ENCODE measurements at regions of chr5 and their contacts with region 1.

Region 1: GRCh38 chr5:81014348-81014747 is 54.2 kb downstream of the RASGRF2 start:
- DNase-seq: no peak
- ATAC-seq: no peak
- H3K4me3 ChIP-seq: no peak overlapping the region
- H3K27ac ChIP-seq: no peak overlapping the region
- H3K4me1 ChIP-seq: peaks cover 13% of the 10 kb centered on the region
- H3K27me3 ChIP-seq: no peaks in the 10 kb centered on the region
- CTCF ChIP-seq: no peak
- POLR2A ChIP-seq: no peak
- RAD21 ChIP-seq: no peak

Region 2: GRCh38 chr5:80825786-80826460 is 188.4 kb before region 1 on chr5:
- CTCF ChIA-PET with region 1: no interaction called
- POLR2A ChIA-PET with region 1: no interaction called
- dilution Hi-C with region 1: no loop called
- in situ Hi-C with region 1: no loop called
- intact Hi-C with region 1: no loop called
- DNase-seq: no peak
- ATAC-seq: no peak
- H3K4me3 ChIP-seq: no peak overlapping the region
- H3K27ac ChIP-seq: no peak overlapping the region
- H3K4me1 ChIP-seq: no peaks in the 10 kb centered on the region
- H3K27me3 ChIP-seq: no peaks in the 10 kb centered on the region
- CTCF ChIP-seq: no peak
- POLR2A ChIP-seq: no peak
- RAD21 ChIP-seq: no peak

Region 3: GRCh38 chr5:80975065-80975464 is 39.3 kb before region 1 on chr5:
- CTCF ChIA-PET with region 1: interaction called, 3 read pairs
- POLR2A ChIA-PET with region 1: no interaction called
- dilution Hi-C with region 1: no loop called
- in situ Hi-C with region 1: no loop called
- intact Hi-C with region 1: loop called (anchors 5 kb)
- DNase-seq: peak; percentile 57
- ATAC-seq: peak; percentile 50
- H3K4me3 ChIP-seq: no peak overlapping the region
- H3K27ac ChIP-seq: peak overlapping the region; percentile 24; the same call in 1 of the 2 replicates
- H3K4me1 ChIP-seq: peaks cover 13% of the 10 kb centered on the region
- H3K27me3 ChIP-seq: no peaks in the 10 kb centered on the region
- CTCF ChIP-seq: no peak
- POLR2A ChIP-seq: no peak
- RAD21 ChIP-seq: no peak

Region 4: DNA sequence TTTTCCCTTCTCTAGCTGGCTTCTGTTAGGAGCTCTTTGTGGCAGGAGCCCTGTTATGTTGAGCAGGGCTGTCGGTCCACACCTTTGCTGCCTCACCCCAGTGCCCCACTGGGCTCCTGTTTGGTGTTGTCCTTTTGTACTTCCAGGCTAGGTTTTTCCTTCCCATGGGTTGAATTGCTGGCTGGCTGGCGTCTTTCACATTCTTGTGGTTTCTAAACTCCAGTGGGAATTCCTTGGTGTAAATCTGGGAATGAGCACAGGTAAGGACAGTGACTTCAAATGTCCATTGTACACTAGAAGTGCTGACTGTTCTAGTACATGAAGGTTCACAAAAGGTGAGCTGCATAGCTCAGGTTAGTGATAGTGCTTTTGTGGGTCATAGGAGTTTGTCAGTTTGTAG is 23.8 kb before region 1 on chr5:
- CTCF ChIA-PET with region 1: no interaction called
- POLR2A ChIA-PET with region 1: no interaction called
- dilution Hi-C with region 1: no loop called
- in situ Hi-C with region 1: no loop called
- intact Hi-C with region 1: no loop called
- DNase-seq: no peak
- ATAC-seq: no peak
- H3K4me3 ChIP-seq: no peak overlapping the region
- H3K27ac ChIP-seq: no peak overlapping the region
- H3K4me1 ChIP-seq: peaks cover 7% of the 10 kb centered on the region
- H3K27me3 ChIP-seq: no peaks in the 10 kb centered on the region
- CTCF ChIP-seq: no peak
- POLR2A ChIP-seq: no peak
- RAD21 ChIP-seq: no peak

Region 5: DNA sequence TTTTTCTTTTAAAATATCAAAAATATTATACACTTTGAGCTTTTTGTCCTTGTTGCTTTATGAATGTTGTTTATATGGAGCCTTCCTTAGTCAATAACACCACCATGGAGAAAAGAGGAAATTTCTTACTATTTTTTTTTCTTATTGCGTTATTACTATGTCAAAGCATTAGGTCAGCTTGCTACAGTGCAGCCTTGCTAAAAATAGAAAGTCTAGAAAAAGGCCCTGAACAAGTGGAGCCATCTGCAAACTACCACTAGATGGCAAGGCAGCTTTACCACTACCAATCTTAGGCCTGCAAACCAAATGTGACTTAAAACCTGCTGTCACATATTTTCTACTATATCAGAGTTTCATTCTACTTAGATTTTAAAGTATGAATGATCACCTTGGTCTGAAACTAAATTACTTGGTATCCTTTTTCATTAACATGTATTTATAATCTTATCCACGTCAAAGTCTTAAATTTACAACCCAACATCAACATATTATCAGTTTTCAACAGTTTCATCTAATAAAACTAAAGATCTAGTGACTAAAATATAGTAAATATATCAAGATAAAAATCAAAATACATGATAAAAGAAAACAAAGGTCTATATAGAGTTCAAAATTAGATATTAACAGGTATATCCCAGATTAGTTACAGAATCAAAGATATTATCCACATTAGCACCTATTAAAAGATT is 492.7 kb after region 1 on chr5:
- CTCF ChIA-PET with region 1: no interaction called
- POLR2A ChIA-PET with region 1: no interaction called
- dilution Hi-C with region 1: no loop called
- in situ Hi-C with region 1: no loop called
- intact Hi-C with region 1: no loop called
- DNase-seq: peak; percentile 93
- ATAC-seq: peak; percentile 95
- H3K4me3 ChIP-seq: no peak overlapping the region
- H3K27ac ChIP-seq: no peak overlapping the region
- H3K4me1 ChIP-seq: no peaks in the 10 kb centered on the region
- H3K27me3 ChIP-seq: no peaks in the 10 kb centered on the region
- CTCF ChIP-seq: peak; percentile 96
- POLR2A ChIP-seq: no peak
- RAD21 ChIP-seq: peak; percentile 98

Measured in IMR-90 (cell line).